H1 (cell line): ENCODE measurements at regions of chr1 and their contacts with region 1.

Region 1: DNA sequence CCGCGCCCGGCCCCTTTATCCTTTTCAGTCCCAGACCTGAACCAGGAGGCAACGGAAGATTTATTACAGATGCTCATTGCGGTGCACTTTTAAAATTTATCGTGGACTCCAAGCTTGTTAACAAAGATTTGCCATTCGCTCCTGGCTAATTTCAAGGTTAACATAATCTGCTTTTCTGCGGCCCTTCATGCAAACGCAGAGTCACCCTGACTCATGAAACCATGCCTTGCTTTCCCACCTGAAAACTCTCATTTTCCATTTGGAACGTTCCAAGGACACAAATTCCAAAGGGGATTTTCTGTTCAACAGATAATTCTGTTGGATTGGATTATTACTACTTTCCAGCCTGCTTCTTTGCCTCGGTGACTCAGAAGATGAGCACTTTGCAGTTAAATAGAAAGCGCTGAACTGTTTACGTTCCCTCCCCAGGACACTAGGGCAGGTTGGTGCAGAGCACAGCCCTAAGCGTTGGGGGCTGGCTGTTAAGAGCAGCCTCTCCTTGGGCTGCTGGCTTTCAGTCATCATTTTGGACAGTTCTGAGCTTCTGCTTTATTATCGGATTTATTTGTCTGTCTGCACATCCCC is 51.1 kb downstream of the CD247 start:
- DNase-seq: no peak
- H3K4me3 ChIP-seq: no peak overlapping the region
- H3K27ac ChIP-seq: no peak overlapping the region
- H3K4me1 ChIP-seq: peaks cover 1 to 11% (median 6%) of the 10 kb centered on the region in 4 experiments; a peak in 5 of 7 replicates
- H3K27me3 ChIP-seq: no peaks in the 10 kb centered on the region
- CTCF ChIP-seq: no peak
- EP300 ChIP-seq: no peak
- POLR2A ChIP-seq: no peak
- RAD21 ChIP-seq: no peak

Region 2: GRCh38 chr1:167136191-167136614 is 331.0 kb before region 1 on chr1:
- CTCF ChIA-PET with region 1: no interaction called
- POLR2A ChIA-PET with region 1: no interaction called
- DNase-seq: no peak
- H3K4me3 ChIP-seq: no peak overlapping the region
- H3K27ac ChIP-seq: no peak overlapping the region
- H3K4me1 ChIP-seq: peaks cover 2 to 18% (median 11%) of the 10 kb centered on the region in 4 experiments; a peak in 5 of 7 replicates
- H3K27me3 ChIP-seq: no peaks in the 10 kb centered on the region
- CTCF ChIP-seq: no peak
- EP300 ChIP-seq: no peak
- POLR2A ChIP-seq: no peak
- RAD21 ChIP-seq: no peak

Region 3: DNA sequence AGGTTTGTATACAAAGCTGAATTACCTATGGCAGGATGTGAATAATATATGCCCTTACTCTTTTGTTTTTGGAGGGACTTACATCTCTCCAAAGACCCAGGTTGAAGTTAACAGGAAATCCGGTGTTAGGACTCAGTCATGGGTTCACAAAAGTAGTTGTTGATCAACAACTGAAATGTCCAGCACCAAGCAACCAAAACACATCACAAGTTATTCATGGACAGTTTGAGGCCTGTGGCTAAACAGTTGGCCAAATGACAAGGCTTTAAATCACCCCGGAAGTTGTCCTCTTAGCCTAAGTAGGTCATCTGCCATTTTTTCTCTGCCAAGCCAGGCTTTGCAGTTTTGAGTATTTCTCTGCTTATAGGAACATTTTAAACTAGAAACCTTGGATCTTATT is 38.8 kb before region 1 on chr1:
- CTCF ChIA-PET with region 1: no interaction called
- POLR2A ChIA-PET with region 1: no interaction called
- DNase-seq: no peak
- H3K4me3 ChIP-seq: no peak overlapping the region
- H3K27ac ChIP-seq: no peak overlapping the region
- H3K4me1 ChIP-seq: peaks cover 30 to 59% (median 35%) of the 10 kb centered on the region in 4 experiments
- H3K27me3 ChIP-seq: no peaks in the 10 kb centered on the region
- CTCF ChIP-seq: no peak
- EP300 ChIP-seq: no peak
- POLR2A ChIP-seq: no peak
- RAD21 ChIP-seq: no peak

Region 4: GRCh38 chr1:167454894-167455785 is 12.1 kb before region 1 on chr1:
- CTCF ChIA-PET with region 1: interaction called, 54 read pairs
- POLR2A ChIA-PET with region 1: interaction called, 8 read pairs
- DNase-seq: peak in 1 of 2 experiments; percentile 79
- H3K4me3 ChIP-seq: peak overlapping the region; percentile 61 to 67 (median 64)
- H3K27ac ChIP-seq: no peak overlapping the region
- H3K4me1 ChIP-seq: peaks cover 0 to 15% (median 4%) of the 10 kb centered on the region in 4 experiments; a peak in 6 of 7 replicates
- H3K27me3 ChIP-seq: peaks cover 0 to 28% (median 24%) of the 10 kb centered on the region in 4 experiments; a peak in 6 of 7 replicates
- CTCF ChIP-seq: no peak
- EP300 ChIP-seq: no peak
- POLR2A ChIP-seq: no peak
- RAD21 ChIP-seq: peak in 1 of 2 experiments; percentile 2; a peak in 1 of 4 replicates

Region 5: DNA sequence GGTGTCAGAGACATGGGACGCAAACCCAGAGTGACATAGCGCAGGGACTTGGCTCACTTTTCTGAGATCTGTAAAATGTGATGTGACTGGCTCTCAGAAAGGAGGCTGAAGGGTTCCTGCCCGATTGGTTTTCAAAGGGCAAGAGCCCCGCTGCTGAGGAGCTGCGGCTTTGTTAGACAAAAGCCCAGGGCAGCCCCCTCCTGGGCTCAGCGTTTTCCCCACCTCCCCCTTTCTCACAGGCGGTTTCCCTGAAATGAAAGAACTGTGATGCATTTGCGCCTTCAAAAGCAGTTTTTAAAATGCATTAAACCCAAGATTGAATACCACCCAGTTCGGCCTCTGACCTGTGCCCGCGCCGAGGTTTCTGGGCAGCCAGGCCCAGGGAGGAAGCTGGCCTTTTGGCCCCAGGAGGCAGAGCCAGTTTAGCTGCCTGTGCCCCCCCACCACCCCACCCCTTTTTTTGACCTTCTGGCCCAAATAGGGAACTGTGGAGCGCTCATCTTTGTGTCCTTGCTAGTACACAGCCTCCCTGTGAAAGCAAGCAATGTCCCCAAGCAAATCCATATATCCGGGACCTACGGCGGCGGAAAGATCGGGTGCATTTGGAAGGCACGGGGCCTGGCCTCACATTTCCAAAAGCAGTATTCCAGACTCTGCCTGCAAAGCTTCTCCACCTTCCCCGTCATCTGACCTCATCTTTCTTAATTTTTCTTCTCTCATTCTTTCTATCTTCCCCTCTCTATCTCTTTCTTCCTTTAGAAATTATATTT is 22.5 kb after region 1 on chr1:
- CTCF ChIA-PET with region 1: interaction called, 12 read pairs
- POLR2A ChIA-PET with region 1: interaction called, 3 read pairs
- DNase-seq: peak; percentile 41 to 73
- H3K4me3 ChIP-seq: peak overlapping the region in 3 of 4 experiments; percentile 8 to 45 (median 12); a peak in 4 of 8 replicates
- H3K27ac ChIP-seq: peak overlapping the region; percentile 57
- H3K4me1 ChIP-seq: peaks cover 3 to 31% (median 18%) of the 10 kb centered on the region in 4 experiments
- H3K27me3 ChIP-seq: 0 out of 7 replicates have a peak, but pooled peaks cover 0 to 3% (median 0%) of the 10 kb centered on the region in 4 experiments
- CTCF ChIP-seq: no peak
- EP300 ChIP-seq: no peak; a peak in 1 of 3 replicates
- POLR2A ChIP-seq: no peak
- RAD21 ChIP-seq: 0 out of 4 replicates have a peak, but pooled peaks of 1 of the 2 experiments have one; percentile 3

Region 6: DNA sequence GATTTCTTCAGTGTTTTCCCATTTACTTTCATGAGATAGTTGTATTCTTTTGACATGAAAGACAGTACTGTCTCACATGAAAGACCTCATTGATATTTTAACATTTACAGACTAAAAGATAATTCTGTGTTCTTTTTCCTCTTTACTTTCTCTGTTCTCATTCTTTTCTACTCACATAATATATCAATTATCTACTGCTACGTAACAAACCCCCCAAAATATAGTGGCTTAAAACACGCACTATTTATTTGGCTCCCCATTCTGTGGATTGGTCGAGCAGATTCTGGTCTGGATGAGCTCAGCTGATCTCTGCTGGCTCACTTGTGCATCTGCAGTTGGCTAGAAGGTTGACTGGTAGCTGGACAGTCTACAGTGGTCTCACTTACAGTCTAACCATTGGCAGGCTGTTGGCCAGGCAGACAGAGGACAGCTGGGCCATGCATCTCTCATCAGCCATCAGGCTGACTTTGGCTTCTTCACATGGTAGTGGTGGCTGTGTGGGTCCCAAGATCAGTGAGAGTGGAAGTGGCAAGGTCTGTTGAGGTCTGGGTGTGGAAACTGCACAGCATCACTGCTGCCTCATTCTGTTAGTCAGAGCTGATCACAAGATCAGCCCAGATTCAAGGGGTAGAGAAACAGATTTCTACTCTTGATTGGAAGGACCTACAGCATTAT is 317.8 kb after region 1 on chr1:
- CTCF ChIA-PET with region 1: no interaction called
- POLR2A ChIA-PET with region 1: no interaction called
- DNase-seq: no peak
- H3K4me3 ChIP-seq: no peak overlapping the region
- H3K27ac ChIP-seq: no peak overlapping the region
- H3K4me1 ChIP-seq: no peaks in the 10 kb centered on the region
- H3K27me3 ChIP-seq: no peaks in the 10 kb centered on the region
- CTCF ChIP-seq: no peak
- EP300 ChIP-seq: no peak
- POLR2A ChIP-seq: no peak
- RAD21 ChIP-seq: no peak